ENCODE measurements at regions of chr12 and their contacts with region 1.

Region 1: GRCh38 chr12:109944561-109945359 is 44.7 kb downstream of the TCHP start:
- DNase-seq: peak; percentile 74
- H3K4me3 ChIP-seq: no peak overlapping the region
- H3K27ac ChIP-seq: peak overlapping the region; percentile 62
- H3K4me1 ChIP-seq: peaks cover 28% of the 10 kb centered on the region
- H3K27me3 ChIP-seq: no peaks in the 10 kb centered on the region
- CTCF ChIP-seq: no peak
- POLR2A ChIP-seq: no peak

Region 2: DNA sequence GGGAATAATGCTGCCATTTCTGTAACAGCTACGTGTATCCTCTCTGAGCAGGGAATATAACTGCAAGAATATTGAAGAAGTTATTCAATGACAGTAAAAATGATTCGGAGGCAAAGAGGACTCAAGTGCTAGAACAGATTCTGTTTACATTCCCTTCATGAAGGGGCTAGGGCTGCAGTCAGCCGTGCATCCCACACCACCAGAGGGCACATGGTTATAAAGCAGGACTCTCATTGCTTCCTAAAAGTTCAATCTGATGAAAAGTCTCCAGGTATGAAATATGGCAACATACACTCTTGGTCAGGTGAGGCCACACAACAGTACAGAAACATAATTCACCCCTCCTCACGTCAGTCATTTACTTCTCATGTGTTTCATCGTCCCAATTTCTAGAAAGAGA is 10.7 kb before region 1 on chr12:
- CTCF ChIA-PET with region 1: interaction called, 12 read pairs
- POLR2A ChIA-PET with region 1: no interaction called
- dilution Hi-C with region 1: no loop called
- intact Hi-C with region 1: loop called (anchors 1 kb)
- DNase-seq: peak; percentile 19
- H3K4me3 ChIP-seq: no peak overlapping the region
- H3K27ac ChIP-seq: no peak overlapping the region
- H3K4me1 ChIP-seq: peaks cover 21% of the 10 kb centered on the region
- H3K27me3 ChIP-seq: no peaks in the 10 kb centered on the region
- CTCF ChIP-seq: peak; percentile 15 to 29
- POLR2A ChIP-seq: no peak

Measured in endothelial cell of umbilical vein (primary cell).